Colonic mucosa (tissue), 4 donors: ENCODE measurements at regions of chr21 and their contacts with region 1.

Region 1: GRCh38 chr21:42449296-42449927 is 45.7 kb downstream of the UBASH3A start:
- DNase-seq: no peak
- H3K4me3 ChIP-seq: no peak overlapping the region
- H3K27ac ChIP-seq: no peak overlapping the region
- H3K4me1 ChIP-seq: no peaks in the 10 kb centered on the region
- H3K27me3 ChIP-seq: no peaks in the 10 kb centered on the region
- CTCF ChIP-seq: no peak

Region 2: GRCh38 chr21:41601573-41602368 is 847.6 kb before region 1 on chr21:
- intact Hi-C with region 1: no loop called
- DNase-seq: no peak
- H3K4me3 ChIP-seq: no peak overlapping the region
- H3K27ac ChIP-seq: no peak overlapping the region
- H3K4me1 ChIP-seq: no peaks in the 10 kb centered on the region
- H3K27me3 ChIP-seq: no peaks in the 10 kb centered on the region
- CTCF ChIP-seq: no peak

Region 3: GRCh38 chr21:42309753-42310221 is 139.6 kb before region 1 on chr21:
- intact Hi-C with region 1: loop called (anchors 2 kb)
- DNase-seq: peak; percentile 85
- H3K4me3 ChIP-seq: no peak overlapping the region
- H3K27ac ChIP-seq: peak overlapping the region; percentile 23
- H3K4me1 ChIP-seq: no peaks in the 10 kb centered on the region
- H3K27me3 ChIP-seq: peaks cover 7% of the 10 kb centered on the region
- CTCF ChIP-seq: peak; percentile 69

Region 4: GRCh38 chr21:42337830-42338728 is 111.3 kb before region 1 on chr21:
- intact Hi-C with region 1: no loop called
- DNase-seq: peak; percentile 90
- H3K4me3 ChIP-seq: no peak overlapping the region
- H3K27ac ChIP-seq: no peak overlapping the region
- H3K4me1 ChIP-seq: peaks cover 4% of the 10 kb centered on the region
- H3K27me3 ChIP-seq: peaks cover 3% of the 10 kb centered on the region
- CTCF ChIP-seq: peak; percentile 66

Region 5: DNA sequence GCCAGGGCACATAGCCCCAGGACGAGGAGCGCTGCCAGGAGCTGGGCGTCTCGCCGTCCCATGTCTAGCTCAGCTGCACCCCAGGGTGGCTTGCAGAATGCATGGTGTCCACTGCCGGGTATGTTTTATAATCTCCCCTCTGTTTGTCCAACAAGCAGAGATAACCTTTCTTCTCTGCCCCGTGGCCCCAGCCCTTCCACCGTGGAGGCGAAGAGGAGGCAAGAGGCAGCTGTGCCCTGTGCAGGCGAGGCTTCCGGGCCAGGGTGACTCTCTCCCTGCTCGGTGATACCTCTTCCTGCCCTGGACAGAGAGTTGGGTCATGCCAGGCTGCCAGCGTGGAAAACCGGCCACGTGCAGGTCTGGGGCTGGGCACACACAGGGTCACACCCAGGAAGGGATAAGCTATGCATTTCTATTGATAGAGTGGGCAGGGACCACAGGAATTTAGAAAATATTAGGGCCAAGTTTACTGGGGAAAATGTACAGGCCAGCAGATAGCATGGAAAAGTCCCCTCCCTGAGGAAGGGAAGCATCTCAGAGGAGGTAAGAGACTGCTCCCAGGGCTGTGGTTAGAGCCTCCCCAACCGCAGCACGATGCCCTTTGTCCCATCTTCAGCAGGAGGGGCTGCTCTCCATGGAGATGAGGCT is 98.4 kb before region 1 on chr21 and contains the start of gene TFF2:
- intact Hi-C with region 1: no loop called
- DNase-seq: no peak
- H3K4me3 ChIP-seq: no peak within 1 kb of the TSS
- H3K27ac ChIP-seq: no peak within 1 kb of the TSS
- H3K4me1 ChIP-seq: no peaks in the 10 kb centered on the region
- H3K27me3 ChIP-seq: no peaks in the 10 kb centered on the region
- CTCF ChIP-seq: no peak
- total RNA-seq, gene TFF2: 2.3 to 2.5 TPM

Region 6: DNA sequence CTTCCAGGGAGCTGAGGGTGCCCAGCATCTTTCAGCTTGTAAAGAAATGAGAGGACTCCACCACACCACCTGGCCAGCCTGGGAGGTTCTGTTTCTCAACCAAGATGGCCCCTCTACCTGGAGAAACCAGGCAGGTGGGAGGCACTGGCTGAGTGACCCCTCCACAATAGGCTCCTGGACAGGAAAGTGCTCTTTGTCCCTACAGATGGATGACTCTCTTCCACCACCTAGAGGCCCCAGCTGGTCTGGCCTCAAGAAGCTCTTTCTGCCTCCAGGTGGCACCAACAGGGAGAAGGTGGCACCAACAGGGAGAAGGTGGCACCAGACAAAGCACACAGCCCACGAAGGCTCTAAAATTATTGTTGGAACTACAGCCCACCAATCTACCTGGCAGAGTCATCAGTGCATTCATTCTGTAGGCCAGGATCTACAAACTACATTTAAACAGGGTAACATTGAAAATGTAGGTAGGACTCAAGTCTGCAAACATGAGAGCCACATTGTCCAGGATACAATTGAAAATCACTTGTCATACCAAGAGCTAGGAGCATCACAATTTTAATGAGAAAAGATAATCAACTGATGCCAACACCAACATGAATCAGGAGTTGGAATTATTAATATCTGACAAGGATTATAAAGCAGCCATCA is 68.0 kb before region 1 on chr21:
- intact Hi-C with region 1: loop called (anchors 5 kb)
- DNase-seq: peak; percentile 85
- H3K4me3 ChIP-seq: no peak overlapping the region
- H3K27ac ChIP-seq: no peak overlapping the region
- H3K4me1 ChIP-seq: no peaks in the 10 kb centered on the region
- H3K27me3 ChIP-seq: no peaks in the 10 kb centered on the region
- CTCF ChIP-seq: peak; percentile 84